ENCODE measurements at regions of chr12 and their contacts with region 1.

Region 1: DNA sequence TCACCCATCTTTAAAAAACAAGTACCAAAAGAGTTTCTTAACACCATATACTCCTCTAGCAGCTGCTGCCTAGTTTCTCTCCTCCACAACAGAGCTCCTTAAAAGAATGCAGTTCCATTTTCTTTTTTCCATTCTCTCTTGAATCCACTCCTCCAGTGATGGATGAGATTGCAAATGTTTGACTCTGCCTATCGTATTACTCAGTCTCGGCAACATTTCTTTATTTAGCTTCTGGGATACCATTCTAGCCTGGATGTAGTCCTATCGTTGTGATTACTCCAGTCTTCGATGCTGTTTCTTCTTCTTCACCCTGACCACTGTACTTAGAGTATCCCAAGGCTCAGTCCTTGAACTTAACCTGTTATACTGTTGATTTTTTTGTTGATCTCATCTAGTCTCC is 30.8 kb downstream of the CAND1 start:
- DNase-seq: no peak
- H3K4me3 Mint-ChIP-seq: no peak overlapping the region
- H3K27ac Mint-ChIP-seq: no peak overlapping the region
- H3K4me1 Mint-ChIP-seq: peaks cover 9% of the 10 kb centered on the region
- H3K27me3 Mint-ChIP-seq: no peaks in the 10 kb centered on the region
- CTCF ChIP-seq: no peak

Region 2: GRCh38 chr12:67315661-67316060 is 15.7 kb after region 1 on chr12:
- CTCF ChIA-PET with region 1: no interaction called
- intact Hi-C with region 1: loop called (anchors 2 kb)
- DNase-seq: no peak
- H3K4me3 Mint-ChIP-seq: no peak overlapping the region
- H3K27ac Mint-ChIP-seq: no peak overlapping the region
- H3K4me1 Mint-ChIP-seq: no peaks in the 10 kb centered on the region
- H3K27me3 Mint-ChIP-seq: no peaks in the 10 kb centered on the region
- CTCF ChIP-seq: no peak

Region 3: DNA sequence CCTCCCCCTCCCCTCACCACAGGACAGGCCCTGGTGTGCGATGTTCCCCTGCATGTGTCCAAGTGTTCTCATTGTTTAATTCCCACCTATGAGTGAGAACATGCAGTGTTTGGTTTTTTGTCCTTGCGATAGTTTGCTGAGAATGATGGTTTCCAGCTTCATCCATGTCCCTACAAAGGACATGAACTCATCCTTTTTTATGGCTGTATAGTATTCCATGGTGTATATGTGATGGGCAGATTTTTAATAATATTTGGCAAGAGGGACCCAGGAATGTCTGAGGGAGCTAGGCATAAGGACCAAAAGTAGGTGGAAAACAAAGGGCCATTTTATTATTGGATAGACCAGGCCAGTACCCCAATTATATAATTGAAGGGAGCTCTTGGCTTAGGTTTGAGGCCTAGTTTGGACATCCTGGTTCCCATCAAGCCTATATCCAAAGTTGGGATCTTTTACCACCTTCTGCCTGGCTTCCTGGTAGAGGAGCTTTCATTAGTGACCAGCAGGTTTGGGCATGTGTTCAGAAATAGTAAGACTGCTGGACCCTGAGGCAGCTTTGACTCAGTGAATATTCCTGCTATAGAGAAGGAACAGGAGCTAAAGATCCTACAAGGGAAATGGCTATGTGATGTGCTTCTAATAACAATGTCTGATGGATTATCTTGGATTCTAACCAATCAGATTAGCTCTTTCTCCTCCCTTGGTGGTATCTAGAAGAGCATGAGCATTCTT is 45.2 kb after region 1 on chr12:
- CTCF ChIA-PET with region 1: no interaction called
- intact Hi-C with region 1: no loop called
- DNase-seq: no peak
- H3K4me3 Mint-ChIP-seq: no peak overlapping the region
- H3K27ac Mint-ChIP-seq: no peak overlapping the region
- H3K4me1 Mint-ChIP-seq: no peaks in the 10 kb centered on the region
- H3K27me3 Mint-ChIP-seq: no peaks in the 10 kb centered on the region
- CTCF ChIP-seq: no peak